ENCODE measurements at regions of chr6 and their contacts with region 1.

Region 1: DNA sequence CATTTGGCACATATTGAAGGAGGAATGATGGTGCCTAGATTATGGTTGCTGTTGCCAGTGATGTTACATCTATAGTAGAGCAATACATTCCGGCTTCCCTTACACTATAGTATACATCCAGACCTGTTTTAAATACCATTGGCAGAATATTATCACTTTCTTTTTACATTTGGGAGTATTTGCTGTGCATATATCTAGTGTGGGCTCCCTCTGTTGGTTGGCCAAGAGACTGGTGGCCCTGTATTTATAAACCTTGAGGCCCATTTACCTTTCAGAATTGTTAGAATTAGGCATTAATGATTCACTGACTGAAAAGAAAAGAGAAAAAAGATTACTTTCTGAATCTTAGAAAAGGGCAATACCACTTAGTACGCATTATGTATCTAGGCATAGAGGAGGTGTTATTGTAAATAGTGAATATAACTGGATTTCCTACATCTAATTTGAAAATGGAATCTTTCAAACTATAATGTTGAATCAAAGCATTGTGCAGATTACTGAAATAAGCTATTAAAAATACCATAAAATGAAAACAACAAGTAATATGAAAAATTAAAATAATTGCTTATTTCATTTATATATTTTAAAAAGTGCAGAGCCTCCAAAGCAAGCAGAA is 628.8 kb upstream of the MAN1A1 start:
- DNase-seq: no peak
- H3K4me3 ChIP-seq: no peak overlapping the region
- CTCF ChIP-seq: peak; percentile 49

Region 2: DNA sequence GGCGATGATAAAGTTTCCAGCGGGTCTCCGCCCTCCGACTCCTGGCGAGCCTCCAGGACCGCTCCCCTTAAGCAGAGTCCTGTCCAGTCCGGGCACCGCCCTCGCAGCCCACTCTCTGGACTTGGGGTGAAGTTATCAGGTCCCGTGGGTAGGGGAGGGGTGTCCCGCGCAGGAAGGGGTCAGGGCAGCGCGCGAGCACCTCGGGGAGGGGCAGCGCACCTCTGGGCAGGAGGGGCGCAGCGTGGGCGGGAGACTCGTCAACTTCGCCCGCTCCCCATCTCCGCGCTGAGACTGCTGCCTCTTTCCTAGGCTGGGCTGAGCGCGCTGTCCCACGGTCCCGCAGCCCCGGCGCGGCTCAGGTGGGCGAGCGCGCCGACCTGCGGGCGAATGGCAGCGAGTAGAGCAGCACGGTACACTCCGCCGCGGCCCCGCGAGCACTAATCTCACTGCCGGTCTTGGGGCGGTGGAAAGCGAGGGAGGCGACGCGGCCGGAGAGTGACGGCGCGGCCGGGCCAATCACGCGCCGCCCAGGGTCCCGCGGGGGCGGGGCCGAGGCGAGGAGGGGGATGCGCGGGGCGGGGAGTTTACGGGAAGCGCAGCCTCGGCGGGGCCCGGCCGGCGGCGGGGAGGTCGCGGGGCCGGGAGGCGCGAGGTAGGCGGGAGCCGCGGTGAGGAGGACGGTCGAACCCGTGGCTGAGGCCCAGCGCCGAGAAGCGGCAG is 628.9 kb before region 1 on chr6 and contains the start of gene MAN1A1:
- CTCF ChIA-PET with region 1: interaction called, 40 read pairs
- POLR2A ChIA-PET with region 1: no interaction called
- DNase-seq: no peak
- H3K4me3 ChIP-seq: peak within 1 kb of the TSS; percentile 81
- CTCF ChIP-seq: no peak

Region 3: GRCh38 chr6:119742188-119742803 is 236.1 kb before region 1 on chr6:
- CTCF ChIA-PET with region 1: interaction called, 13 read pairs
- POLR2A ChIA-PET with region 1: no interaction called
- DNase-seq: no peak
- H3K4me3 ChIP-seq: no peak overlapping the region
- CTCF ChIP-seq: peak; percentile 69

Measured in AG04449 (cell line).